Endothelial cell of umbilical vein (primary cell): ENCODE measurements at regions of chr7 and their contacts with region 1.

Region 1: GRCh38 chr7:82291931-82292330 is 151.6 kb downstream of the CACNA2D1 start:
- DNase-seq: peak; percentile 87
- H3K4me3 ChIP-seq: peak overlapping the region in 1 of 3 experiments; percentile 5
- H3K27ac ChIP-seq: peak overlapping the region; percentile 85
- H3K4me1 ChIP-seq: peaks cover 29% of the 10 kb centered on the region
- H3K27me3 ChIP-seq: no peaks in the 10 kb centered on the region
- CTCF ChIP-seq: no peak
- POLR2A ChIP-seq: no peak

Region 2: DNA sequence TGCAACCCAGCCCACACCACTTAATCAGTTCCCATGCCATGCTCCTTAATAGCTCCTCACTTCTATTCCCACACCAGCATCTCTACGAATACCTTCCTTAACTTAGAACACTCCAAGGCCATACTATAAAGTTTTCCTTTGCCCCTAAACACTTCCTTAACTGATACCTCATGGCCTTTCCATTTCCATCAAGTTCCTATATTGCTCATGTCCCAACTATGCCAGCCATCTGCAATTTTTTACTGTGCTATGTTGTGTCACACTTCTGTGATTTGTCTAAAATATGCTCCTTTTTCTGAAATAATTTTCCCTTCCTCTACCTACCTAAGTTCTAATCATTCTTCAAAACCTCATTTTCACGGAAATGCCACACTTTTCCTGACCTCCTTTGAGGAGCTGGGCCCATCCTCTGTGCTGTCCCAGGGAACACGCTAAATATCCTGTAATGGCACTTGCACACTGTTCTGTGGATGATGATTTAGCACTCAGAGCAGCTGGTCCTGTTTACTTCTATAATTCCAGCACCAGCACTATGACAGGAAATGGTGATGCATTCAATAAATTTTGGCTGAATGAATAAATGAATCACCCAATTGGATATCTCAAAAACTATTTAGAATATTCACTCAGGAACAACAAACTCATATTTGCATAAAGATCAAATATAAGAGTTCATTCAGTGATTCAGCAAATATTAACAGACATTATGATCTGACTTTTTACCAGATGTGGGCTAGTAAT is 255.6 kb before region 1 on chr7:
- CTCF ChIA-PET with region 1: no interaction called
- POLR2A ChIA-PET with region 1: no interaction called
- dilution Hi-C with region 1: no loop called
- intact Hi-C with region 1: loop called (anchors 2 kb)
- DNase-seq: peak; percentile 90
- H3K4me3 ChIP-seq: peak overlapping the region in 1 of 3 experiments; percentile 28
- H3K27ac ChIP-seq: peak overlapping the region; percentile 90
- H3K4me1 ChIP-seq: peaks cover 58% of the 10 kb centered on the region
- H3K27me3 ChIP-seq: no peaks in the 10 kb centered on the region
- CTCF ChIP-seq: no peak
- POLR2A ChIP-seq: peak; percentile 12

Region 3: GRCh38 chr7:82105463-82105862 is 186.5 kb before region 1 on chr7:
- CTCF ChIA-PET with region 1: no interaction called
- POLR2A ChIA-PET with region 1: no interaction called
- dilution Hi-C with region 1: no loop called
- intact Hi-C with region 1: loop called (anchors 10 kb)
- DNase-seq: peak; percentile 78
- H3K4me3 ChIP-seq: no peak overlapping the region
- H3K27ac ChIP-seq: peak overlapping the region; percentile 70
- H3K4me1 ChIP-seq: peaks cover 27% of the 10 kb centered on the region
- H3K27me3 ChIP-seq: no peaks in the 10 kb centered on the region
- CTCF ChIP-seq: no peak
- POLR2A ChIP-seq: no peak

Region 4: DNA sequence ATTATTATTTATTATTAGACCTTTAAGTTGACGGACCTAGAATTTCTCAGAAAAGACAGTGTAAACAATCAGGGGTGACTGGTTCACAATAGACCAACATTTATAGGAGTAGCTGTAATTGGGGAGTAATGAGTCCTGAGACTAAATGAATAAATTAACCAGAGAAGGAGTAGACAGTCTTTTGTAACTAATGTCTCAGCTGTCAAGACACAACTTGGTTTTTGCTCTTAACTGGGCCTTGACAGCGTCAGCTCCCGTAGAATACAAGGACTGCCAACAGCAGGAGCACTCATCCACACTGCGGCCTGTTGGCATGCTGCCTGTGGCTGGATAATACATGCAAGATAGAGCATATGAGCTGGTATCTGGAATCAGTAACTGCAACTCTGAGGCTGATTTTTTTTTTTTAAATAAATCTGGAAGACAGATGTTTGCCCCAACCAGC is 27.8 kb after region 1 on chr7:
- CTCF ChIA-PET with region 1: no interaction called
- POLR2A ChIA-PET with region 1: no interaction called
- dilution Hi-C with region 1: no loop called
- intact Hi-C with region 1: no loop called
- DNase-seq: peak; percentile 62
- H3K4me3 ChIP-seq: no peak overlapping the region
- H3K27ac ChIP-seq: no peak overlapping the region
- H3K4me1 ChIP-seq: no peaks in the 10 kb centered on the region
- H3K27me3 ChIP-seq: no peaks in the 10 kb centered on the region
- CTCF ChIP-seq: no peak
- POLR2A ChIP-seq: no peak

Region 5: GRCh38 chr7:82443547-82444219 is 151.8 kb after region 1 on chr7 and contains the start of gene CACNA2D1:
- CTCF ChIA-PET with region 1: interaction called, 3 read pairs
- POLR2A ChIA-PET with region 1: no interaction called
- dilution Hi-C with region 1: no loop called
- intact Hi-C with region 1: loop called (anchors 2 kb)
- DNase-seq: peak; percentile 88
- H3K4me3 ChIP-seq: peak within 1 kb of the TSS; percentile 59 to 91 (median 79)
- H3K27ac ChIP-seq: peak within 1 kb of the TSS; percentile 80
- H3K4me1 ChIP-seq: peaks cover 19% of the 10 kb centered on the region
- H3K27me3 ChIP-seq: no peaks in the 10 kb centered on the region
- CTCF ChIP-seq: peak in 1 of 2 donors; percentile 26
- POLR2A ChIP-seq: peak; percentile 88
- total RNA-seq, gene CACNA2D1: 38.6 and 42.1 TPM in 2 replicates

Region 6: GRCh38 chr7:82598958-82599357 is 307.0 kb after region 1 on chr7:
- CTCF ChIA-PET with region 1: no interaction called
- POLR2A ChIA-PET with region 1: no interaction called
- dilution Hi-C with region 1: no loop called
- intact Hi-C with region 1: loop called (anchors 5 kb)
- DNase-seq: peak; percentile 86
- H3K4me3 ChIP-seq: no peak overlapping the region
- H3K27ac ChIP-seq: no peak overlapping the region
- H3K4me1 ChIP-seq: peaks cover 30% of the 10 kb centered on the region
- H3K27me3 ChIP-seq: no peaks in the 10 kb centered on the region
- CTCF ChIP-seq: no peak
- POLR2A ChIP-seq: no peak